GM12878 (cell line): ENCODE measurements at regions of chr12 and their contacts with region 1.

Region 1: DNA sequence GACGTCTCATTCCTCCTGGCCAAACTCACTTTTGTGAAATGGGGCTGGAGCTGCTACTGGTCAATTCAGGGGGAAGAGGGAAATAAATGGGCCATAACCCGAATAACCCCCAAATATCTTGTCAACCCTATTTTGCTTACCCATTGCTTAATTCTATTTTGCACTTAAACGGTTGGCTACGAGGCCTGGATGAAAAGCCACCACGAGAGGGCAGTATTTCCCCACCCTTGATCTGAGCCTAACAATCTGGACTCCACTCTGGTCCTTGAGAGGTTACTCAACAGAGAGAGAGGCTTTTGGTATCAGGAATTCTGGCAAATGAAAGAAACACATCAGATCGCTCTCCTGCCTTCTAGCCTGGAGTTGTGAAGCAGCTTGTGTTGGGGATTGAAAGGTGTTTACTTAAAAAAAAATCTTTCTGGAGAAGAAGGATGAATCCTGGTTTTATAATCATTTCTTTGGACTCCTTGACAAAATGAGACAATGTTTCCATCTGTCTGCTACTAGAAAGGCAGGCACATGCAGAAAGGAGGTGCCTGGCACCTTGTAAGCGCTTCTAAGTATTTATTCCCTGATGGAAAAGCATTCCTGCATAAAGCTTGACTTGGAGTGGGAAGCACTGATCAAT is 22.4 kb upstream of the FBXO21 start:
- DNase-seq: no peak
- ATAC-seq: peak; percentile 88
- H3K4me3 ChIP-seq: no peak overlapping the region
- H3K27ac ChIP-seq: no peak overlapping the region
- H3K4me1 ChIP-seq: no peaks in the 10 kb centered on the region; the same call in 1 of the 2 replicates
- H3K27me3 ChIP-seq: no peaks in the 10 kb centered on the region; a peak in 1 of 4 replicates
- CTCF ChIP-seq: peak; percentile 88 to 94 (median 89)
- EP300 ChIP-seq: no peak
- POLR2A ChIP-seq: no peak
- RAD21 ChIP-seq: peak; percentile 84

Region 2: GRCh38 chr12:117202556-117202955 is 10.1 kb before region 1 on chr12:
- CTCF ChIA-PET with region 1: interaction called, 11 read pairs
- POLR2A ChIA-PET with region 1: no interaction called
- RAD21 ChIA-PET with region 1: no interaction called
- SMC1A ChIA-PET with region 1: interaction called, 3 read pairs
- in situ Hi-C with region 1: no loop called
- intact Hi-C with region 1: no loop called
- DNase-seq: no peak
- ATAC-seq: no peak
- H3K4me3 ChIP-seq: no peak overlapping the region
- H3K27ac ChIP-seq: no peak overlapping the region
- H3K4me1 ChIP-seq: no peaks in the 10 kb centered on the region
- H3K27me3 ChIP-seq: no peaks in the 10 kb centered on the region; a peak in 1 of 4 replicates
- CTCF ChIP-seq: no peak
- EP300 ChIP-seq: no peak
- POLR2A ChIP-seq: no peak
- RAD21 ChIP-seq: no peak

Region 3: GRCh38 chr12:117587631-117588287 is 375.1 kb after region 1 on chr12:
- CTCF ChIA-PET with region 1: interaction called, 11 read pairs
- POLR2A ChIA-PET with region 1: no interaction called
- RAD21 ChIA-PET with region 1: interaction called, 5 read pairs
- SMC1A ChIA-PET with region 1: interaction called, 6 read pairs
- in situ Hi-C with region 1: loop called (anchors 5 kb)
- intact Hi-C with region 1: loop called (anchors 1 kb)
- DNase-seq: no peak
- ATAC-seq: peak; percentile 82
- H3K4me3 ChIP-seq: no peak overlapping the region
- H3K27ac ChIP-seq: no peak overlapping the region
- H3K4me1 ChIP-seq: no peaks in the 10 kb centered on the region
- H3K27me3 ChIP-seq: peaks cover 0 to 2% of the 10 kb centered on the region in 2 experiments; a peak in 2 of 4 replicates
- CTCF ChIP-seq: peak; percentile 84 to 91 (median 86)
- EP300 ChIP-seq: no peak
- POLR2A ChIP-seq: no peak
- RAD21 ChIP-seq: peak; percentile 61

Region 4: GRCh38 chr12:117850048-117850447 is 637.4 kb after region 1 on chr12:
- CTCF ChIA-PET with region 1: interaction called, 13 read pairs
- POLR2A ChIA-PET with region 1: no interaction called
- RAD21 ChIA-PET with region 1: interaction called, 3 read pairs
- SMC1A ChIA-PET with region 1: interaction called, 3 read pairs
- in situ Hi-C with region 1: loop called (anchors 5 kb)
- intact Hi-C with region 1: no loop called
- DNase-seq: no peak
- ATAC-seq: peak; percentile 65
- H3K4me3 ChIP-seq: no peak overlapping the region
- H3K27ac ChIP-seq: no peak overlapping the region
- H3K4me1 ChIP-seq: peaks cover 6% of the 10 kb centered on the region; the same call in 1 of the 2 replicates
- H3K27me3 ChIP-seq: no peaks in the 10 kb centered on the region
- CTCF ChIP-seq: peak; percentile 67 to 94 (median 82)
- EP300 ChIP-seq: no peak
- POLR2A ChIP-seq: no peak
- RAD21 ChIP-seq: peak; percentile 46